CD4-positive, alpha-beta memory T cell (primary cell): ENCODE measurements at regions of chr20 and their contacts with region 1.

Region 1: GRCh38 chr20:44217342-44218092 is 6.9 kb upstream of the OSER1 start:
- DNase-seq: peak; percentile 69 to 85 (median 74)
- H3K4me3 ChIP-seq: peak overlapping the region; percentile 46 to 54
- H3K4me3 Mint-ChIP-seq: peak overlapping the region; percentile 78 to 92 (median 90)
- H3K27ac ChIP-seq: peak overlapping the region; percentile 57
- H3K27ac Mint-ChIP-seq: peak overlapping the region; percentile 78 to 95 (median 93)
- H3K4me1 ChIP-seq: peaks cover 52% of the 10 kb centered on the region
- H3K4me1 Mint-ChIP-seq: peaks cover 41 to 68% (median 51%) of the 10 kb centered on the region in 4 donors
- H3K27me3 ChIP-seq: no peaks in the 10 kb centered on the region
- H3K27me3 Mint-ChIP-seq: no peaks in the 10 kb centered on the region

Region 2: DNA sequence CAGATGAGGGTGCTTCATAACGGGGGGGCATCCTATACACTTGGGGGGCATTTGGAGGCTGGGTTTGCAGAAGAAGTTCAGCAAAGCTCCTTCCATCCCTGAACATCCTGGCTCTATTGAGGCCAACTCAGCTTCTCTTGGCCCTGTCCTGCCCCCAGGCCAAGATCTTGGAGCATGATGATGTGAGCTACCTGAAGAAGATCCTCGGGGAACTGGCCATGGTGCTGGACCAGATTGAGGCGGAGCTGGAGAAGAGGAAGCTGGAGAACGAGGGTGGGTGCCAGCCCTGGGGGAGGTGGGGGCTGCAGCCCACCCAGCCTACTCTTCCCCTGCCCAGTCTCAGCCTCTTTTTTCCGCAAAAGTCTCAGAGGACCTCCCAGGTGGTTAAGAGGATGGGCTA is 46.8 kb after region 1 on chr20:
- CTCF ChIA-PET with region 1: interaction called, 24 read pairs
- POLR2A ChIA-PET with region 1: no interaction called
- intact Hi-C with region 1: no loop called
- DNase-seq: no peak
- H3K4me3 ChIP-seq: no peak overlapping the region
- H3K4me3 Mint-ChIP-seq: no peak overlapping the region
- H3K27ac ChIP-seq: no peak overlapping the region
- H3K27ac Mint-ChIP-seq: no peak overlapping the region
- H3K4me1 ChIP-seq: no peaks in the 10 kb centered on the region
- H3K4me1 Mint-ChIP-seq: peaks cover 0 to 1% (median 0%) of the 10 kb centered on the region in 4 donors
- H3K27me3 ChIP-seq: no peaks in the 10 kb centered on the region
- H3K27me3 Mint-ChIP-seq: no peaks in the 10 kb centered on the region

Region 3: GRCh38 chr20:44310664-44311639 is 93.4 kb after region 1 on chr20 and contains the start of gene FITM2:
- CTCF ChIA-PET with region 1: interaction called, 669 read pairs
- POLR2A ChIA-PET with region 1: interaction called, 173 read pairs
- intact Hi-C with region 1: loop called (anchors 1 kb)
- DNase-seq: peak; percentile 96 to 98 (median 98)
- H3K4me3 ChIP-seq: peak within 1 kb of the TSS; percentile 78 to 92
- H3K4me3 Mint-ChIP-seq: peak within 1 kb of the TSS; percentile 91 to 97 (median 95)
- H3K27ac ChIP-seq: peak within 1 kb of the TSS; percentile 64
- H3K27ac Mint-ChIP-seq: peak within 1 kb of the TSS; percentile 92 to 99 (median 95)
- H3K4me1 ChIP-seq: peaks cover 23% of the 10 kb centered on the region
- H3K4me1 Mint-ChIP-seq: peaks cover 18 to 29% (median 21%) of the 10 kb centered on the region in 4 donors
- H3K27me3 ChIP-seq: no peaks in the 10 kb centered on the region
- H3K27me3 Mint-ChIP-seq: peaks cover 0 to 2% of the 10 kb centered on the region in 2 donors
- total RNA-seq, gene FITM2: 5.8 to 6.3 TPM

Region 4: GRCh38 chr20:44388466-44389023 is 171.0 kb after region 1 on chr20:
- CTCF ChIA-PET with region 1: interaction called, 95 read pairs
- POLR2A ChIA-PET with region 1: no interaction called
- intact Hi-C with region 1: loop called (anchors 1 kb)
- DNase-seq: peak; percentile 41 to 69 (median 46)
- H3K4me3 ChIP-seq: no peak overlapping the region
- H3K4me3 Mint-ChIP-seq: no peak overlapping the region
- H3K27ac ChIP-seq: no peak overlapping the region
- H3K27ac Mint-ChIP-seq: no peak overlapping the region
- H3K4me1 ChIP-seq: no peaks in the 10 kb centered on the region
- H3K4me1 Mint-ChIP-seq: peaks cover 2 to 11% (median 6%) of the 10 kb centered on the region in 4 donors
- H3K27me3 ChIP-seq: no peaks in the 10 kb centered on the region
- H3K27me3 Mint-ChIP-seq: peaks cover 8 to 17% of the 10 kb centered on the region in 2 donors

Region 5: GRCh38 chr20:44609511-44610312 is 392.2 kb after region 1 on chr20:
- CTCF ChIA-PET with region 1: interaction called, 56 read pairs
- POLR2A ChIA-PET with region 1: interaction called, 4 read pairs
- intact Hi-C with region 1: loop called (anchors 1 kb)
- DNase-seq: peak; percentile 65 to 80 (median 74)
- H3K4me3 ChIP-seq: no peak overlapping the region
- H3K4me3 Mint-ChIP-seq: peak overlapping the region in 6 of 8 donors; percentile 62 to 77 (median 66)
- H3K27ac ChIP-seq: peak overlapping the region; percentile 23
- H3K27ac Mint-ChIP-seq: peak overlapping the region; percentile 17 to 98 (median 85)
- H3K4me1 ChIP-seq: peaks cover 12% of the 10 kb centered on the region
- H3K4me1 Mint-ChIP-seq: peaks cover 5 to 19% (median 12%) of the 10 kb centered on the region in 4 donors
- H3K27me3 ChIP-seq: no peaks in the 10 kb centered on the region
- H3K27me3 Mint-ChIP-seq: no peaks in the 10 kb centered on the region

Region 6: GRCh38 chr20:44714696-44715482 is 497.4 kb after region 1 on chr20 and contains the start of gene CCN5:
- CTCF ChIA-PET with region 1: no interaction called
- POLR2A ChIA-PET with region 1: no interaction called
- intact Hi-C with region 1: no loop called
- DNase-seq: no peak
- H3K4me3 ChIP-seq: no peak within 1 kb of the TSS
- H3K4me3 Mint-ChIP-seq: no peak within 1 kb of the TSS
- H3K27ac ChIP-seq: no peak within 1 kb of the TSS
- H3K27ac Mint-ChIP-seq: peak within 1 kb of the TSS in 1 of 7 donors; percentile 57
- H3K4me1 ChIP-seq: no peaks in the 10 kb centered on the region
- H3K4me1 Mint-ChIP-seq: no peaks in the 10 kb centered on the region
- H3K27me3 ChIP-seq: no peaks in the 10 kb centered on the region
- H3K27me3 Mint-ChIP-seq: peaks cover 2 to 5% of the 10 kb centered on the region in 2 donors
- total RNA-seq, gene CCN5: not detected